ENCODE measurements at regions of chrX and their contacts with region 1.

Region 1: GRCh38 chrX:113947548-113947947 is 636.3 kb upstream of the HTR2C start:
- DNase-seq: no peak
- H3K4me3 ChIP-seq: no peak overlapping the region
- H3K4me1 ChIP-seq: peaks cover 12% of the 10 kb centered on the region
- H3K27me3 ChIP-seq: no peaks in the 10 kb centered on the region

Region 2: GRCh38 chrX:113868177-113868576 is 79.4 kb before region 1 on chrX:
- in situ Hi-C with region 1: no loop called
- DNase-seq: peak; percentile 15 to 43
- H3K4me3 ChIP-seq: no peak overlapping the region
- H3K4me1 ChIP-seq: peaks cover 11% of the 10 kb centered on the region
- H3K27me3 ChIP-seq: no peaks in the 10 kb centered on the region

Region 3: GRCh38 chrX:113980953-113981352 is 33.4 kb after region 1 on chrX:
- in situ Hi-C with region 1: no loop called
- DNase-seq: no peak
- H3K4me3 ChIP-seq: no peak overlapping the region
- H3K4me1 ChIP-seq: peaks cover 6% of the 10 kb centered on the region
- H3K27me3 ChIP-seq: no peaks in the 10 kb centered on the region

Region 4: GRCh38 chrX:114075073-114075673 is 127.6 kb after region 1 on chrX:
- in situ Hi-C with region 1: loop called (anchors 10 kb)
- DNase-seq: no peak
- H3K4me3 ChIP-seq: no peak overlapping the region
- H3K4me1 ChIP-seq: peaks cover 27% of the 10 kb centered on the region
- H3K27me3 ChIP-seq: no peaks in the 10 kb centered on the region